ENCODE measurements at regions of chr10 and their contacts with region 1.

Region 1: GRCh38 chr10:116742367-116743265 is at the start of gene HSPA12A:
- DNase-seq: peak; percentile 75 to 85
- H3K4me3 ChIP-seq: peak within 1 kb of the TSS; percentile 86
- H3K27ac ChIP-seq: peak within 1 kb of the TSS; percentile 13
- H3K4me1 ChIP-seq: peaks cover 10% of the 10 kb centered on the region; the same call in 1 of the 2 replicates
- H3K27me3 ChIP-seq: no peaks in the 10 kb centered on the region
- CTCF ChIP-seq: no peak
- total RNA-seq, gene HSPA12A: 11.3 and 12.1 TPM in 2 replicates

Region 2: DNA sequence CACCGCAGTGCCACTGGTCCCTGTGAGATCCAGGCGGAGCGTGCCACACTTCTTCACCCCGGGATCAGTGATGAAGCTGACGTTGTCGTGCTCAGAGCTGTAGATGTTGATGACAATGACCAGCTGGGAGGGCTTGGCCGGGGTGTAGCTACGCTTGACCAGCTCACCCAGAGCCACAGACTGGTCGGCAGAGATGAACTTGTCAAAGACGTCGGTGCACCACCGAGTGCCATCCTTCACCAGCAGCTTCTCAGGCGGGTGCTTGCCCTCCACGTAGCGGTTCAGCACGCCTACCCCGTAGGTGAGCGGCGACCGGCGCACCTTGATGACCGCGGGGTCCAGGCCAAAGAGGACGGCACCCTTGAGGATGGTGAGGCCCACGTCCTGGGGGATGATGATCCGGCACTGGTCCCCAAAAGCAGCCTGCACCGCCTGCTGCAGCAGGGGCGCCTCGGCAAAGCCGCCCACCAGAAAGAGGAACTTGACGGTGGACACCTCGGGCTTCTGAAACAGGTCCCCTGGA is 67.7 kb before region 1 on chr10:
- CTCF ChIA-PET with region 1: no interaction called
- POLR2A ChIA-PET with region 1: no interaction called
- intact Hi-C with region 1: no loop called
- DNase-seq: no peak
- H3K4me3 ChIP-seq: no peak overlapping the region
- H3K27ac ChIP-seq: no peak overlapping the region
- H3K4me1 ChIP-seq: peaks cover 7% of the 10 kb centered on the region; the same call in 1 of the 2 replicates
- H3K27me3 ChIP-seq: no peaks in the 10 kb centered on the region
- CTCF ChIP-seq: no peak

Region 3: GRCh38 chr10:116774728-116775151 is 32.1 kb after region 1 on chr10:
- CTCF ChIA-PET with region 1: no interaction called
- POLR2A ChIA-PET with region 1: no interaction called
- intact Hi-C with region 1: loop called (anchors 1 kb)
- DNase-seq: peak; percentile 90 to 91
- H3K4me3 ChIP-seq: no peak overlapping the region
- H3K27ac ChIP-seq: no peak overlapping the region
- H3K4me1 ChIP-seq: peaks cover 38% of the 10 kb centered on the region
- H3K27me3 ChIP-seq: no peaks in the 10 kb centered on the region
- CTCF ChIP-seq: no peak